ENCODE measurements at regions of chr2 and their contacts with region 1.

Region 1: DNA sequence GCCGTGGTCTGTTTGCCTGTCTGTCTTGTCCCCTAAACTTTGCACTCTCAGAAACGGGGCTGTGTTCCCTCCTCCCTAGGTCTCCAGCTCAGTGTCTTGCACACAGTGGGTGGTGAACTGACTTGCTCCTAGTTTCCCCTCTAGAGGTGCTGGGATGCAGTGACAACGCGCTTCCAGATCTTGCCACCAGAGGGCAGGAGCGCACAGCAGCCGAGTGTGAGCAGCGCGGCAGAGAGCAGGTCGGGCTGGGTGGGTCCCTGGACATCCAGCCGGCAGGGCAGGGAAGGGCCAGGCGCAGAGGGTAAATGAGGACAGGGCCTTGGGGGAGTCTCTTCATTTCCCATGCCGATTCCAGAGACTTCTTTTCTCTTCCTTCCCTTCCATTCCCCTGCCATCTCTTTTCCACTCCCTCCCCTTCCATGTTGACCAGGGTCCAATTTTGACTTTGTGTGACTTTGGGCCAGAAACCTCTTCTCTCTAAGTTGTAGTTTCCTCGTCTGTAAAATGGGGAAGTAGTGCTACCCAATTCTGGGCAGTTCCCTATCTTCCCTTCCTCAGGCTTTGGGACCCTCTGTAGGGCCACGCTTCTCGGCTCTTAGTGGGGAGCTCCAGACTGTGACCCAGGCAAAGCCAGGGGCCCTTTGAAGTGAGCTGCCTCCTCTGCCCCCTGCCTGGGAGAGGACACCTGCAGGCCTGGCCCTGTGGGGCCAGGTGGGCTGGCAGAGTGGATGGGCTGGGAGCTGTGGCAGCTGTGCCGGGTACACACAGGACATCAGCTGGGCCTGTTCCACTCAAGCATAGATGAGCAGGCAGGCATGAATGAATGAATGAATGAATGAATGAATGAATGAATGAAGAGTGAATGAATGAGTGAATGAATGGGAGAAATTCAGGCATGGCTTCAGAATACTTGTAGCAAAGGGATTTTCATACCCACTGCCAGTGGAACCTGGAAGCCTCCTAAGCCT is 43.3 kb upstream of the TAF1B start:
- DNase-seq: peak; percentile 80 to 92
- ATAC-seq: peak; percentile 72

Region 2: GRCh38 chr2:9961013-9961412 is 161.1 kb after region 1 on chr2:
- intact Hi-C with region 1: no loop called
- DNase-seq: no peak
- ATAC-seq: no peak

Region 3: GRCh38 chr2:10057231-10058107 is 257.5 kb after region 1 on chr2:
- intact Hi-C with region 1: loop called in 1 of 2 experiments (anchors 10 kb)
- DNase-seq: peak; percentile 69 to 75
- ATAC-seq: peak; percentile 81

Measured in left colon (tissue), 2 donors.